ENCODE measurements at regions of chr20 and their contacts with region 1.

Region 1: DNA sequence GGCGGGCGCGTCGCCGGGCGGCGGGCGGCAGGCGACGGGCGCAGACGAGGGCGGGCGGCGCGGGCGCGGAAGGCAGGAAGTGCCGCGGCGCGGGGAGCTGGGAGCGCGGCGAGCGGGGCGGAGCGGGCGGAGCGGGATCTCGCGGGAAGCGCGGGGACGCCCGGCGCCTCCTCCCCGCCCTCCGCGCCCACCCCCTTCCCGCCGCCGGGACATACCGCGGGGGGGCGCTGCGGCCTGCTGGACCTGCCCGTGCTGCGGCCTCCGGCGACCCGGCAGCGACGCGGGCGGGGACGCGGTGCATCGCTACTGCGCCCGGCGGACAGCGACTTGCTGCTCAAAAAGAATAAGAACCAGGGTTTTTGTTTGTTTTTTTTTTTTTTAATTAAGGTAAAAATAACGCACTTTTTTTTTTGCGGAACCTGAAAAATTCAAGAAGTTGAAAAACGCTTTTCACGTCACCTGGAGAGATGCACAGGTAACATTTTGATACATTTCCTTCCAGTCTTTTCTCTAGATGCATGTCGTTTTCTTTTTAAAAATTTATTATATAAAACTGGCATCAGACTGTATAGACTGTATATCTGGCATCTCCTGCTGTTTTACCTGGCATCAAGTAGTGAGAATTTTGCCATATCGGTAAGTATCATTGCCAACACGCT is at the start of gene CENPB:
- DNase-seq: peak; percentile 94
- H3K4me3 ChIP-seq: peak within 1 kb of the TSS; percentile 68 to 83 (median 73)
- H3K27ac ChIP-seq: peak within 1 kb of the TSS; percentile 79 to 90 (median 84)
- H3K4me1 ChIP-seq: peaks cover 32 to 52% (median 47%) of the 10 kb centered on the region in 4 donors
- H3K27me3 ChIP-seq: no peaks in the 10 kb centered on the region
- CTCF ChIP-seq: peak; percentile 75 to 94 (median 90)
- EP300 ChIP-seq: no peak
- POLR2A ChIP-seq: no peak
- total RNA-seq, gene CENPB: 131 to 225 (median 199) TPM

Region 2: DNA sequence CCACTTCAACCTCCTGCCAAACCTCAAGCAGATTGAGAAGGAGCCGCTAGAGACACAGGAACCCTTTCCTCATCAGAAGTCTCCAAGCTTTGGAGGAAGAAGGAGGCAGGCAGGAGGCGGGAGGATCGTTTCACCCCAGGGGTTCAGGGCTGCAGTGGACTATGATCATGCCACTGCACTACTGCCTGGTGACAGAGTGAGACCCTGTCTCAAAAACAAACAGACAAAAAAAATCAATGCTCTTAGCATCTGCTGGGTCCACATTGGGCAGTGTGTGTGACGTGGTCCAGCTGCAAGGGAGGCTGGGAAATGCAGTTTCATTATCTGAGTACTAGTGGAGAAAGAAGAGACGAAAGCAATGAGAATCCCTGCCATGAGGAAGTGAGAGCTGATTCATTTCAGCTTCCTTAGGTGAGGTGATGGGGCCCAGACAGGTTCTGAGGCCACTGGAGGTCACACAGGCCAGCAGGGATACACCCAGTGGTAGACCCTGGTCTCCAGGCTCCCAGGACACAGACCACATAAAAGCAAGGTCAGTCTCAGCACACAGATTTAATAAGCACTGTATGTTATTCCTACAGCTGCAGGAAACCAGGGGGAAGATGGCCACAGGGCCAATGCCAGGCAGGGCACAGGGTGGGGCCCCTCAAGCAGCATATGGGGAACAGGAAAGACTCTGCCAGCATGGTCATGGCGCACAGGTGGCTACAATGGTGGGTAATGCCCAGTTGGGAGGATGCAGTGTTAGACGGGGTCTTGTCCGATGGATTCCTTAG is 127.9 kb before region 1 on chr20:
- intact Hi-C with region 1: no loop called
- DNase-seq: no peak
- H3K4me3 ChIP-seq: no peak overlapping the region
- H3K27ac ChIP-seq: no peak overlapping the region
- H3K4me1 ChIP-seq: peaks cover 4 to 15% (median 13%) of the 10 kb centered on the region in 4 donors
- H3K27me3 ChIP-seq: peaks cover 0 to 55% (median 16%) of the 10 kb centered on the region in 4 donors
- CTCF ChIP-seq: no peak
- EP300 ChIP-seq: no peak
- POLR2A ChIP-seq: no peak

Region 3: GRCh38 chr20:3820048-3820900 is 33.5 kb after region 1 on chr20 and contains the start of gene AP5S1:
- intact Hi-C with region 1: loop called (anchors 2 kb)
- DNase-seq: peak; percentile 99
- H3K4me3 ChIP-seq: peak within 1 kb of the TSS; percentile 65 to 85 (median 74)
- H3K27ac ChIP-seq: peak within 1 kb of the TSS; percentile 91 to 98 (median 95)
- H3K4me1 ChIP-seq: peaks cover 28 to 39% (median 33%) of the 10 kb centered on the region in 4 donors
- H3K27me3 ChIP-seq: no peaks in the 10 kb centered on the region
- CTCF ChIP-seq: peak; percentile 99 to 100 (median 99)
- EP300 ChIP-seq: no peak
- POLR2A ChIP-seq: no peak
- total RNA-seq, gene AP5S1: 7.9 to 11.7 (median 11.2) TPM

Region 4: DNA sequence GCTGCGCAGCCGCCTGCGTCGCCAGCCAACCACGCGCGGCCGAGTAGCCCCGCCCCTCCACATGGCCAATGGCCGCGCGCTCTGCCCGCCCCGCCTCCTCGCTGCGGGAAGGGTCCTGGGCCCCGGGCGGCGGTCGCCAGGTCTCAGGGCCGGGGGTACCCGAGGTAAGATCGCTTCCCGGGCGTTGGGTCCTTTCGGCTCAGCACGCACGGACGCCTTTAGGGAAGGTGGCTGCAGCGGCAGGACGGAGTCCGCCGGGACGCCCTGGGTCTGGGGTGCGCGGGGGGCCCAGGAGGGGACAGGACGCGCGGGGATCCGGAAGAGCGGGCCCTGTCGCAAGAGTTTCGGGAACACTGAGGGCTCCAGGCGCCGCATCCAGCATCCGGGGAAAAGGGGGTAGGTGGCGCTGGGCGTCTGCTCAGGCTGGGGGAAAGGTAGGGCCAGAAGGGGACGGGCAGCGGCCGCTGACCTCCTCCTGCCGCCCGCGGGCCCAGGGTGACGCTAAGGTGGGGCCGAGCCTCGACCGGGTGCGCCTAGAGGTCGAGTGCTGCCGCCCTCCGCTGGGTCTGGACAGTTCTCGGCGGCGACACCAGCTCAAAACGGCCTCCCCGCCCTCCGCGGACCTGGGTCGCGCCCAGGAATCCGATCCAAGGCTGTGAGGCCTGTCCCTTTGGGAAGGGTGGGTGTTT is 60.1 kb after region 1 on chr20 and contains the start of gene MAVS:
- intact Hi-C with region 1: loop called (anchors 1 kb)
- DNase-seq: peak; percentile 95
- H3K4me3 ChIP-seq: peak within 1 kb of the TSS; percentile 63 to 93 (median 88)
- H3K27ac ChIP-seq: peak within 1 kb of the TSS; percentile 87 to 96 (median 96)
- H3K4me1 ChIP-seq: peaks cover 16 to 36% (median 32%) of the 10 kb centered on the region in 4 donors
- H3K27me3 ChIP-seq: no peaks in the 10 kb centered on the region
- CTCF ChIP-seq: no peak
- EP300 ChIP-seq: no peak
- POLR2A ChIP-seq: peak; percentile 48
- total RNA-seq, gene MAVS: 34.6 to 56.1 (median 42.8) TPM

Region 5: GRCh38 chr20:4082406-4083097 is 295.8 kb after region 1 on chr20:
- intact Hi-C with region 1: loop called (anchors 5 kb)
- DNase-seq: no peak
- H3K4me3 ChIP-seq: no peak overlapping the region
- H3K27ac ChIP-seq: peak overlapping the region in 2 of 4 donors; percentile 11 to 26
- H3K4me1 ChIP-seq: peaks cover 13 to 25% (median 17%) of the 10 kb centered on the region in 4 donors
- H3K27me3 ChIP-seq: no peaks in the 10 kb centered on the region
- CTCF ChIP-seq: no peak
- EP300 ChIP-seq: no peak
- POLR2A ChIP-seq: no peak

Measured in esophagus muscularis mucosa (tissue), 4 donors.